ENCODE measurements at regions of chr7 and their contacts with region 1.

Region 1: DNA sequence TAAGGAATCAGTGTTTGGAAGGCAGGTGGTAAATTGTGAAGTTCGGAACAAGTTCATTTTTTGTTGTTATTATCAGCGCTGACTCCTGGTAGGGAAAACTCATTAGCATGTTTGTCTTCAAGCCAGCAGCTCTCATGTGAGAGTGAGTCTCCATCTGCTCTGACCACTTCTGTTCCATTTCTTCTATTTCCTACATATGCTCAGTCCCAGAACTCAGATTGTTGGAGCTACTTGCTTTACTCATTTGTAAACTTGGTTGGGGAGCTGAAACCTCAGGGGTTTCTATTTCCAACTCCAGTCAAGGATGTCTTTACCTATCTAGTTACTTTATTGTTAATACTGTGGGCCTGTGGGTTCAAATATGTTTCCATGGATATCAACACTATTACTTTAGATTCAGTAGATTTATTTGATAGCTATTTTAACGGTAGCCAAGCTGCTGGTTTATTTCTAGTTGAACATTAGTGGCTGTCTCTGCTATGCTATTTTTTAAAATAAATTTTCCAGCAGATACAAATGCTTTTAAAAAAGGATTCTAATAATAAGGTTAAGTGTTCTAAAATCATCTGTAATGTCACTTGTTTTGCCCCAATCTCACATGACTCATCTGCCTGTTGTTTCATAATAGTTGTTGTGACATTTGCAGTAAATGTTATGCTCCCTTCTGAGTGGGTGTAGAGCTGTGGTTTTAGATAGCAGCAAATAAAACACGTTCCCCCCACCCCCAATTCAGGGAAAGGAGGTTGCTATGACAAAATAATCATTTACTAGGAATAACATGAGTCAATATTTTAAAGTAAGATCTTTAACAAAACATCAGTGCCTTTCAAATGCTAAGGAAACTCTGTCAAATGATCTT is 143.3 kb downstream of the HDAC9 start:
- DNase-seq: peak; percentile 11
- H3K4me3 Mint-ChIP-seq: no peak overlapping the region
- H3K27ac Mint-ChIP-seq: peak overlapping the region; percentile 93
- H3K4me1 Mint-ChIP-seq: peaks cover 18% of the 10 kb centered on the region
- H3K27me3 Mint-ChIP-seq: no peaks in the 10 kb centered on the region

Region 2: DNA sequence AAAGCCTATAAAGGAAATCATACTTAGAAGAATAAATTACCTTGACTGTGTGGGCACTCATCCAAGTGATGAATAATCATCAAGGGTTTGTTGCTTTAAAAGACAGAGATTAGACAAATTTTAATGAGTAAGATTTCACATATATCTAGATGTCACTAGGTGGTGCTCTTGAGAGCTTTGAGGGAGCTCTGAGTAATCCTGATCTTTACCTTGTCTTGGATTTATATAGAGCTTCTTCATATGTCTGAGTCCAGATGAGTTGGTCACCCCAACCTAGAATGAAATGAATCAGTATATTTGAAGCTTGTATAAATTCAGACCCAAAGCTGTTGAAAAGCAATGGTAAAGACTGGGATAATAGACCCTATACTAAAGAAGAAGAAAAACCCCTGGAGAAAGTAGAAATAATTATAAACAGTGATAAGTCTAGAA is 1837.7 kb before region 1 on chr7:
- intact Hi-C with region 1: no loop called
- DNase-seq: no peak
- H3K4me3 Mint-ChIP-seq: no peak overlapping the region
- H3K27ac Mint-ChIP-seq: no peak overlapping the region
- H3K4me1 Mint-ChIP-seq: no peaks in the 10 kb centered on the region
- H3K27me3 Mint-ChIP-seq: peaks cover 4% of the 10 kb centered on the region

Region 3: GRCh38 chr7:18495412-18496340 is 143.1 kb before region 1 on chr7 and contains the start of gene HDAC9:
- intact Hi-C with region 1: loop called (anchors 1 kb)
- DNase-seq: no peak
- H3K4me3 Mint-ChIP-seq: peak within 1 kb of the TSS; percentile 59
- H3K27ac Mint-ChIP-seq: peak within 1 kb of the TSS; percentile 74
- H3K4me1 Mint-ChIP-seq: peaks cover 25% of the 10 kb centered on the region
- H3K27me3 Mint-ChIP-seq: peaks cover 8% of the 10 kb centered on the region
- total RNA-seq, gene HDAC9: 0.86 and 2.0 TPM in 2 replicates

Region 4: DNA sequence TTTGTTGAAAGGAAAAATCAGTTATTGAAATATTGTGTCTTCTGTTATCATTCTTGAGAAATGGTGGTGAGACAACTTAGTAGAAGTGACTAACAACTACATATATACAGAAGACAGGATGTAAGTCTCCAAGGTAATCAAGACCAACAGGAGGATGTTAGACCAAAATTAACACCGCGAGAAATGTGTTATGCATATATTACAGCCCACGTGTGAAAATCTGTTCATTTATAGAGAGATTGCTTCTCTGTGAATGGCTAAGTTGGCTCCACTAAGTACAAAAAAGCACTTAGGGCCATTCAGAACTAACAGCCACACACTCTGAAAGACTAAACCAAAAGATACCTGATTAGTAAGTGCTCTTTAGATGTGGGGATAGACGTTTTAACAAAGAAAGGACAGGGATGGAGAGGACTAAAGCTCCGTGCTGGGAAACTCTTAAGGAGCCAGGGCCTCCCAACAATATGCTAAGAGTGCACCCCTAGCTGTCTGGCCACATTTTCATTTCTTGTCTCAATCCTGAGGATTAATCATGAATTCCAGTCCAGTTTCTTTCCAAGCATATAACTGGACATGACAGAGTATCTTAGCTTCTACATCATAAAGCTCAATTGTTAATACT is 116.8 kb before region 1 on chr7:
- intact Hi-C with region 1: loop called (anchors 1 kb)
- DNase-seq: no peak
- H3K4me3 Mint-ChIP-seq: no peak overlapping the region
- H3K27ac Mint-ChIP-seq: peak overlapping the region; percentile 37
- H3K4me1 Mint-ChIP-seq: no peaks in the 10 kb centered on the region
- H3K27me3 Mint-ChIP-seq: no peaks in the 10 kb centered on the region

Region 5: DNA sequence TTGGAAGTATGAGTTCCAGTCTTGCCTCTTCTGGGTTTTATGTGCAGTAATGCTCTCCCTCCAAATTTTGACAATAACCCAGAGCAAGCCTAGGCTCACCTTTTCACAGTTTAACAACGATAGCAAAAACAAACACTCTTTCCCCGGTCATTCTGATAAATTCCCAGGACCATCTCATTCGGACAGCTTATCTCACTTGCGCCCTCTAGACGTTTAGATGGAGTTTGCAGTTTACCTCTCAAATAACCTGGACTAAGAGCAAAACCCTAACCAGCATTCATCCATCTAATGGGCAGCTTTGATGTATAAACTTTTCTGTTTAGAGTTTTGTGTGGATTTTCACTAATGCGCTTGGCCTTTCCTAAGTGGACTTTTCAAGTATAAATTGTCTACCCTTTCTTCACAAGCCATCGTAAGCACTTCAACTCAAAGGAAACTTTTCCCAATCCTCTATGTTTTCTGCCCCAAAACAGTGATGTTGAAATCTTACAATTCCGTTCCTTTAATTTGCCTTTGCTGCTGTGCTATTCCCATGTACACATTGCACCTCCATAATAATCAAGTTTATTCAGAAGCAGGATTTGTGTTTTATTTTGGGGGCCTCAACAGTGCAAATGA is 28.4 kb before region 1 on chr7:
- intact Hi-C with region 1: loop called (anchors 1 kb)
- DNase-seq: no peak
- H3K4me3 Mint-ChIP-seq: no peak overlapping the region
- H3K27ac Mint-ChIP-seq: no peak overlapping the region
- H3K4me1 Mint-ChIP-seq: no peaks in the 10 kb centered on the region
- H3K27me3 Mint-ChIP-seq: no peaks in the 10 kb centered on the region

Region 6: DNA sequence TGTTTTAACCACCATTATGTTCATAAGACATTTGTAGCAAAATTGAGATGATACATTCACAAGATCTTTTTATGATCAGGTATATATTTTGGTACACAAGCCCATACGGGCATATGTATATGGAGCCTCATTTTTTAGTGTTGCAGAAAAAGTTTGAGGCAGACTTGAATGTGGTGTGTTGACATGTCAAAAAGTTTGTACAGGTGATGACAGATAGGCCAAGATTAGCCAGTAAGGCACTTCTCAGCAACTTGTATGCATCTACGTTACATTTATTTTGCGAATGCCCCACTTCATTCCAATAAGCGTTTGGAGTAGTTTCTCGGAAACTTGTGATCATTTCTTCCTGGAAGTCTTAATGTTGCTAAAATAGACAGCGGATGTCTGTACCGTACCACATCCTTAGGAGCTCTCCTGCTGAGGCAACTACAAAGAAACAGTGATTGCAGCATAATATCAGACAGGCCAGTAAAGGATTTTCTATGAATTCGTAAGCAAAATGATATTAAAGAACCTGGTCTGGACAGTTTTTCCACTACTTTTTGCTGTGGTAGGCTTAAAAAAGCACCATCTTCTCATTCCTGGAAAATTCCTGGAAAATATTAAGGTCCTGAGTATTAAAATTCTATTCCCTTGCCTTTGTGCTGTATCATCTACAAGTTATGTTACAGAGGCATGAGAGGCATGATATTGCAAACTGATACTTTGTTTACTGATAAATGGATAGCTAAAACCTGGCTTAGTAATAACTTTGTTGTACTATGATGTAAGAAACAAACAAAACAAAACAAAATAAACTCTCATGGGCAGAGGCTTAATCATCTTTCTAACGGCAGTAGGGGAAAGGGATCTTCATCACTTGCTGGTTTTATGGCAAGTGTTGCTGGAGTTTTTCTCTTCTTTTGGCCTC is 10.3 kb after region 1 on chr7:
- intact Hi-C with region 1: loop called (anchors 1 kb)
- DNase-seq: no peak
- H3K4me3 Mint-ChIP-seq: no peak overlapping the region
- H3K27ac Mint-ChIP-seq: peak overlapping the region; percentile 41
- H3K4me1 Mint-ChIP-seq: no peaks in the 10 kb centered on the region
- H3K27me3 Mint-ChIP-seq: no peaks in the 10 kb centered on the region

Region 7: DNA sequence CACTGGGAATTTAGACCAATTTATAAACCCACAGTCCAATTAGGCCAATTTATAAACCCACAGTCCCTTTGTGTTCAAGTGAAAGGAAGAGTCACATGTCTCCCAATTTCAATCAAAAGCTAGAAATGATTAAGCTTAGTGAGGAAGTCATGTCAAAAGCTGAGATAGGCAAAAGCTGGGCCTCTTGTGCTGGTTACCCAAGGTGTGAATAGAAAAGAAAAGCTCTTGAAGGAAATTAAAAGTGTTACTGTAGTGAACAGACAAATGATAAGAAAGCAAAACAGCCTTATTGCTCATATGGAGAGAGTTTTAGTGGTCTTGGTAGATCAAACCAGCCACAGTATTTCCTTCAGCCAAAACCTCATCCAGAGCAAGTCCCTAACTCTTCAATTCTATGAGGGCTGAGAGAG is 101.8 kb after region 1 on chr7:
- intact Hi-C with region 1: loop called (anchors 1 kb)
- DNase-seq: peak; percentile 4
- H3K4me3 Mint-ChIP-seq: no peak overlapping the region
- H3K27ac Mint-ChIP-seq: peak overlapping the region; percentile 9
- H3K4me1 Mint-ChIP-seq: peaks cover 14% of the 10 kb centered on the region
- H3K27me3 Mint-ChIP-seq: no peaks in the 10 kb centered on the region

Region 8: DNA sequence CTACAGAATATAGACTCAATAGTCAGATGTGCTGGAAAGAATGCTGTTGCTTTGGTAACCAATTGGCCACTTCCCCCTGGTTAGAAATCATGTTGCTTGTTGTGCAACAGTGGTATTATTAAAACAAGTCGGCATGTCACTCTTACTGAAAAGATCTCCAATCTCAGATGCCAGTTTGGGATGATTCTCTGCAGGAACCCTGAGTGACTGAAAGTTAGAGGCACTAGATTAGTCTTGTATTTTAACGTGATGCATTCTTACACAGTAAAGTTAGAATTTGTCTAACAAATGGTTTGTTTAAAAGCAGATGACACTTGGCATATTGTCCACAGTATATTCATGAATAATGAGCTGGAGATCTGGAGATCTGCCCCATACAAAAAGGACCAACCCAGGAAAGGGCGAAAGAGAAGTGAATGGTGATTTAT is 191.0 kb after region 1 on chr7:
- intact Hi-C with region 1: no loop called
- DNase-seq: no peak
- H3K4me3 Mint-ChIP-seq: no peak overlapping the region
- H3K27ac Mint-ChIP-seq: no peak overlapping the region
- H3K4me1 Mint-ChIP-seq: peaks cover 11% of the 10 kb centered on the region
- H3K27me3 Mint-ChIP-seq: no peaks in the 10 kb centered on the region

Region 9: GRCh38 chr7:18859318-18859717 is 220.5 kb after region 1 on chr7:
- intact Hi-C with region 1: loop called (anchors 1 kb)
- DNase-seq: peak; percentile 1
- H3K4me3 Mint-ChIP-seq: peak overlapping the region; percentile 45
- H3K27ac Mint-ChIP-seq: peak overlapping the region; percentile 96
- H3K4me1 Mint-ChIP-seq: peaks cover 33% of the 10 kb centered on the region
- H3K27me3 Mint-ChIP-seq: no peaks in the 10 kb centered on the region